ENCODE measurements at regions of chr22 and their contacts with region 1.

Region 1: GRCh38 chr22:23786752-23787599 is at the start of gene SMARCB1:
- DNase-seq: peak; percentile 84
- H3K4me3 ChIP-seq: peak within 1 kb of the TSS; percentile 19 to 81 (median 78)
- H3K27ac ChIP-seq: peak within 1 kb of the TSS; percentile 92
- H3K4me1 ChIP-seq: peaks cover 13% of the 10 kb centered on the region
- H3K27me3 ChIP-seq: no peaks in the 10 kb centered on the region
- CTCF ChIP-seq: no peak
- POLR2A ChIP-seq: peak; percentile 75
- total RNA-seq, gene SMARCB1: 113 and 130 TPM in 2 replicates

Region 2: DNA sequence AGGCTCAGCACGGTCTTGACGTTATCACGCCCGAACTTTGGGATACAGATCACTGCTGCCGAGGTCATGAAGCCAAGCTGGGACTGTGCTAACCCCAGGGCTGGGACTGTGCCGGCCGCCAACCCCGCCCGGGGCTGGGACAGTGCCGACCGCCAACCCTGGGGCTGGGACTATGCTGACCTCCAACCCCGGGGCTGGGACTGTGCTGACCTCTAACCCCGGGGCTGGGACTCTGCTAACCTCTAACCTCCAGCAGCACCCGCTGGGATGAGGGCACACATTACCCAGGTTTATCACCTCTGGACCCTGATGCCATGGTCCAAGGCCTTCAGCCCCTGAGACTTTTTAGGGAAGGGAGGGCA is 336.6 kb before region 1 on chr22:
- CTCF ChIA-PET with region 1: no interaction called
- POLR2A ChIA-PET with region 1: no interaction called
- dilution Hi-C with region 1: no loop called
- intact Hi-C with region 1: no loop called
- DNase-seq: no peak
- H3K4me3 ChIP-seq: no peak overlapping the region
- H3K27ac ChIP-seq: no peak overlapping the region
- H3K4me1 ChIP-seq: no peaks in the 10 kb centered on the region
- H3K27me3 ChIP-seq: no peaks in the 10 kb centered on the region
- CTCF ChIP-seq: no peak
- POLR2A ChIP-seq: no peak

Region 3: GRCh38 chr22:23838681-23839468 is 51.9 kb after region 1 on chr22 and contains the start of gene DERL3:
- CTCF ChIA-PET with region 1: no interaction called
- POLR2A ChIA-PET with region 1: no interaction called
- dilution Hi-C with region 1: no loop called
- intact Hi-C with region 1: loop called (anchors 5 kb)
- DNase-seq: peak; percentile 98
- H3K4me3 ChIP-seq: peak within 1 kb of the TSS in 2 of 3 experiments; percentile 26 to 40
- H3K27ac ChIP-seq: no peak within 1 kb of the TSS
- H3K4me1 ChIP-seq: peaks cover 2% of the 10 kb centered on the region
- H3K27me3 ChIP-seq: peaks cover 0 to 2% of the 10 kb centered on the region in 2 experiments
- CTCF ChIP-seq: no peak
- POLR2A ChIP-seq: no peak
- total RNA-seq, gene DERL3: 2.4 and 3.4 TPM in 2 replicates

Region 4: DNA sequence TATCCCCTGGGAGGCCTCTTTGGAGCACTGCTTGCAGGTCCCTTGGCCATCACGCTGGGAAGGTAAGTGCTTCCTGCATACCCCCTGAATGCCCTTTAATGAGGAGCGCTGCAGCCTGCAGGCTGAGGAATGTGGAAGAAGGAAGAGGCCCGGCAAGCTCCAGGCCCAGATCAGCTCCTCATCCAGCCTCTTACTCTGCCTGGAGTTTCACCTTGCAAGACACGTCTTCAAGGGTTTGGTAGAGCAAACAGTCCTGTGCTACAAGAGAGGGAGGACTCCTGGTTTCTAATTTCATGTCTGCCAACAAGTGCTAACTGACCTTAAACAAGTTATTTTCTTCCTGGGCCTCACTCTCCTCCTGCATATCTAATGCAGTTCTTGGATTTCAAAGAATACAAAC is 81.6 kb after region 1 on chr22:
- CTCF ChIA-PET with region 1: no interaction called
- POLR2A ChIA-PET with region 1: no interaction called
- dilution Hi-C with region 1: no loop called
- intact Hi-C with region 1: no loop called
- DNase-seq: no peak
- H3K4me3 ChIP-seq: no peak overlapping the region
- H3K27ac ChIP-seq: no peak overlapping the region
- H3K4me1 ChIP-seq: no peaks in the 10 kb centered on the region
- H3K27me3 ChIP-seq: no peaks in the 10 kb centered on the region
- CTCF ChIP-seq: no peak
- POLR2A ChIP-seq: no peak

Measured in endothelial cell of umbilical vein (primary cell).